HepG2 (cell line): ENCODE measurements at regions of chr6 and their contacts with region 1.

Region 1: GRCh38 chr6:167268683-167269280 is 22.3 kb upstream of the UNC93A start:
- DNase-seq: peak; percentile 93
- ATAC-seq: peak; percentile 95
- H3K4me3 ChIP-seq: peak overlapping the region; percentile 2 to 58 (median 5); a peak in 3 of 6 replicates
- H3K27ac ChIP-seq: peak overlapping the region; percentile 88
- H3K4me1 ChIP-seq: peaks cover 88% of the 10 kb centered on the region
- H3K27me3 ChIP-seq: no peaks in the 10 kb centered on the region
- CTCF ChIP-seq: peak; percentile 24; the same call in 1 of the 2 replicates
- EP300 ChIP-seq: peak; percentile 71 to 94; a peak in 3 of 4 replicates
- POLR2A ChIP-seq: peak; percentile 74 to 83
- RAD21 ChIP-seq: peak; percentile 74

Region 2: GRCh38 chr6:167093922-167094432 is 174.8 kb before region 1 on chr6:
- CTCF ChIA-PET with region 1: no interaction called
- POLR2A ChIA-PET with region 1: no interaction called
- in situ Hi-C with region 1: no loop called
- intact Hi-C with region 1: no loop called
- DNase-seq: no peak
- ATAC-seq: no peak
- H3K4me3 ChIP-seq: no peak overlapping the region
- H3K27ac ChIP-seq: no peak overlapping the region
- H3K4me1 ChIP-seq: peaks cover 11% of the 10 kb centered on the region
- H3K27me3 ChIP-seq: peaks cover 4 to 14% of the 10 kb centered on the region in 2 experiments; a peak in 4 of 5 replicates
- CTCF ChIP-seq: no peak
- EP300 ChIP-seq: no peak
- POLR2A ChIP-seq: no peak
- RAD21 ChIP-seq: no peak

Region 3: DNA sequence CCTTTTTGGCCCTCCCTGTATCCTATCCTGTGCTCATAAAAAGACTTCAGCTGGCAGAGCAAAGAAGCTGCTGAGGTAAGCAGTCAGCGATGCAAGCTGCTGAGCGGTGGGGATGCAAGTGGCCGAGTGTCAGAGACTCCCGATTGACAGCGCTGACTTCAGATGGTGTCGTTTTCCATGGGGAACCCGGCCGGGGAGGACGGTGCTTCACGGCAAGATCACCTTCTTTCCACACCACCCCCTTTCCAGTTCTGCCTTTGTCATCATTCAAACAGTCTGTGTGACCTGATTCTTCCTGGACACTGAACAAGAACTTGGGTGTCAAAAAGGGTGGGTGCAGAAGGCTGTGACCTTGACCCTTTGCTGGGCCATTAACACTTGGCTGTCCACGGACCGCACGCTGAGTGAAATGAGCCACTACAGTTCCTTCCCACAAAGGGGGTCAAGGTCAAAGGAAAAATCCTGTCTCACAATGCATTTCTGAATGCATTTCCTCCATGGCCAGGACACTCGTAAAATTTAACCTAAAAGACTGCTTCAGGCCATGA is 30.6 kb before region 1 on chr6:
- CTCF ChIA-PET with region 1: no interaction called
- POLR2A ChIA-PET with region 1: interaction called, 19 read pairs
- in situ Hi-C with region 1: loop called (anchors 5 kb)
- intact Hi-C with region 1: no loop called
- DNase-seq: peak; percentile 58
- ATAC-seq: peak; percentile 46
- H3K4me3 ChIP-seq: peak overlapping the region; percentile 16 to 53 (median 22); a peak in 5 of 6 replicates
- H3K27ac ChIP-seq: peak overlapping the region; percentile 67
- H3K4me1 ChIP-seq: peaks cover 78% of the 10 kb centered on the region
- H3K27me3 ChIP-seq: no peaks in the 10 kb centered on the region
- CTCF ChIP-seq: 0 out of 2 replicates have a peak, but pooled peaks have one; percentile 8
- EP300 ChIP-seq: no peak
- POLR2A ChIP-seq: peak; percentile 40 to 52; a peak in 2 of 4 replicates
- RAD21 ChIP-seq: no peak

Region 4: GRCh38 chr6:167279766-167280446 is 11.1 kb after region 1 on chr6:
- CTCF ChIA-PET with region 1: no interaction called
- POLR2A ChIA-PET with region 1: interaction called, 33 read pairs
- in situ Hi-C with region 1: no loop called
- intact Hi-C with region 1: no loop called
- DNase-seq: no peak
- ATAC-seq: no peak
- H3K4me3 ChIP-seq: no peak overlapping the region
- H3K27ac ChIP-seq: no peak overlapping the region
- H3K4me1 ChIP-seq: peaks cover 62% of the 10 kb centered on the region
- H3K27me3 ChIP-seq: no peaks in the 10 kb centered on the region
- CTCF ChIP-seq: no peak
- EP300 ChIP-seq: no peak
- POLR2A ChIP-seq: no peak
- RAD21 ChIP-seq: no peak

Region 5: DNA sequence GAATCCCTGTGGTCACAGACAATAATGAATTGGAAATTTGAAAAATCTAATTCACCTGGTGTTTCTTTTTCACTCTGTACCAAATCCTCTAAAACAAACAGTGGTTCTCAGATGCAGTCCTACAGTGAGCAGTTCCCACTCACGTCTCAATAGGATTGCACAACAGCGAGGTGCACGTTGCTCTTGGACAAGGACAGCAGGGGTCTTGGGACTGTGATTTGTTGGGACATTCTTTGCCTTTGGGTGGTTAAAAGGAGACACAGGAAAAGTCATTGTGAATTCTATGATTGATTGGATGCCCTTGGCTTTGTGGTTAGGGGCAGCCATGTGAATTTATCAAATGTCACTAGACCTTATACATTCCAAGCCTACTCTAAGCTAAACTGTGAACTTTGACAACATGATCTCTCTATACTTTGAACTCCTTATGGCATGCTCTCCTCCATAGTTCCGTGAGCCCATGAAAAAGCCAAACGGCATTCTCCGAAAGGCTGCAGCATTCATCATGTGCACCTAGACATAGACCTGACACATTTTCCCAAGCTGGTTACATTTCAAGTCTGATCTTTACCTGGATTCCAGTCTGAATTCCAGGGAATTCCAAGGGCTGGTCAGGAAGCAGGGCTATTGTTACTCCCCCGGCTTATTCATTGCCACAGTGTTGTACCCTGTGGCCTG is 23.0 kb after region 1 on chr6:
- CTCF ChIA-PET with region 1: no interaction called
- POLR2A ChIA-PET with region 1: interaction called, 34 read pairs
- in situ Hi-C with region 1: no loop called
- intact Hi-C with region 1: no loop called
- DNase-seq: peak; percentile 77
- ATAC-seq: peak; percentile 48
- H3K4me3 ChIP-seq: peak overlapping the region; percentile 38 to 53 (median 38); a peak in 4 of 6 replicates
- H3K27ac ChIP-seq: peak overlapping the region; percentile 77
- H3K4me1 ChIP-seq: peaks cover 75% of the 10 kb centered on the region
- H3K27me3 ChIP-seq: no peaks in the 10 kb centered on the region
- CTCF ChIP-seq: peak; percentile 34; the same call in 1 of the 2 replicates
- EP300 ChIP-seq: peak in 1 of 2 experiments; percentile 63; a peak in 1 of 4 replicates
- POLR2A ChIP-seq: no peak; a peak in 1 of 4 replicates
- RAD21 ChIP-seq: peak; percentile 15

Region 6: DNA sequence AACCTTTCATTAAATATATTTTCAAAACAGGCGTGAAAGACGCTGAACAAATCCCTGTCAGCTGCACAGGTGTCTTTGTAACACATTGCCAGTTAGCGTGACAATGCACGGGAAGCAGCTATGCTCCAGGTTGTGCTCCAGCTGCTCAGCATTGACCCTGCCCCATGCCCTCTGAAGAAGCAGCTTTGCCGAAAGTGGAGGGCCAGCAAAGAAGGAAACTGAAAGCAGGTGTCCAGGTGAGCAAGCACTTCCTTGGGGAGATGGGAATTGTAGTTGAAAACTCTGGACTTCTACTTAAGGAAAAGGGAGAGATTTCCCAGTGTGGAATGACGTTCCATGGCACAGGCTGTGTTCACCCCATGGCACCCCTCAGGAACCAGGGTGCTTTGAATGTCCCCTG is 181.8 kb after region 1 on chr6:
- CTCF ChIA-PET with region 1: no interaction called
- POLR2A ChIA-PET with region 1: no interaction called
- in situ Hi-C with region 1: no loop called
- intact Hi-C with region 1: no loop called
- DNase-seq: no peak
- ATAC-seq: no peak
- H3K4me3 ChIP-seq: no peak overlapping the region
- H3K27ac ChIP-seq: no peak overlapping the region
- H3K4me1 ChIP-seq: no peaks in the 10 kb centered on the region
- H3K27me3 ChIP-seq: peaks cover 0 to 34% of the 10 kb centered on the region in 2 experiments; a peak in 3 of 5 replicates
- CTCF ChIP-seq: no peak
- EP300 ChIP-seq: no peak
- POLR2A ChIP-seq: no peak
- RAD21 ChIP-seq: no peak

Region 7: DNA sequence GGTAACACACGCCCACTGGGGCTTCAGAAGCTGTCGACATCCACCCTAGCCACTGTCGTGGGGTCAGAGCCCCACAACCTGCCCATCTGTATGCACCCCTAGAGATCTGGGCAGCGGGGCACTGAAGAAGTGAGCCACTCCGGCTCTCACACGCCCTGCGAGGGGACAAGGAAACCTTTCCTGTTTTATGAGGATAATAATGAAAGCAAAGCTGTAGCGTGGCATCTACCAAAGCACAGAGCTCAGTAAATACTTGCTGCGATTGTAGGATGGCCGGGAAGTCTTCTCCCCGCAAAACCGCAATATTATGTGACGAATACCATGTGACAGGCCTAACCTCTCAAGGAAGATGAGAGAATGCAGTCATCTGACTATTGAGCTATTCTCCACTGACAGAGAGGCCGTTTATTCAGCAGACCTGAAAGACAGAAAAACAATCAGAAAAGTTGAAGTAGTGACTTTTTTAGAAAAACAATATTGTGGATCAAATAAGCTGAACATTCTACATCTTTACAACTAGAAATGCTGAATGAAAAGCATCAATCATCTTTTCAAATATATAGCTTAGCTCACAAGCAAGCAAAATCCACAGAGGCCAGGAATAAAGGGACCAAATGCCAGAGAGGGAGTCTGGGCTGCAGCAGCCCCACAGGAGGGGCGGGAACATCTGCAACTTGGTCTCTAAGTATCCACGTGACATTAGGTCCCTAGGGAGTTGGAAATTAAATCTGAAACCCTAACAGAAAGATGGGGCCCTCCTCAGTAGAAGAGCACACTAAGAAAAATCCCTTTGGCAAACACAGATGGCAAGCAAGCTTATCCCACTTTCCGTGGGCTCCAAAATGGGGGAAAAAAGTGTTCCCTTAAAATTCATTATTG is 263.9 kb after region 1 on chr6:
- CTCF ChIA-PET with region 1: no interaction called
- POLR2A ChIA-PET with region 1: no interaction called
- in situ Hi-C with region 1: no loop called
- intact Hi-C with region 1: no loop called
- DNase-seq: no peak
- ATAC-seq: no peak
- H3K4me3 ChIP-seq: peak overlapping the region in 1 of 3 experiments; percentile 11; a peak in 1 of 6 replicates
- H3K27ac ChIP-seq: no peak overlapping the region
- H3K4me1 ChIP-seq: peaks cover 40% of the 10 kb centered on the region
- H3K27me3 ChIP-seq: peaks cover 0 to 19% of the 10 kb centered on the region in 2 experiments; a peak in 4 of 5 replicates
- CTCF ChIP-seq: no peak
- EP300 ChIP-seq: no peak
- POLR2A ChIP-seq: no peak
- RAD21 ChIP-seq: no peak

Region 8: DNA sequence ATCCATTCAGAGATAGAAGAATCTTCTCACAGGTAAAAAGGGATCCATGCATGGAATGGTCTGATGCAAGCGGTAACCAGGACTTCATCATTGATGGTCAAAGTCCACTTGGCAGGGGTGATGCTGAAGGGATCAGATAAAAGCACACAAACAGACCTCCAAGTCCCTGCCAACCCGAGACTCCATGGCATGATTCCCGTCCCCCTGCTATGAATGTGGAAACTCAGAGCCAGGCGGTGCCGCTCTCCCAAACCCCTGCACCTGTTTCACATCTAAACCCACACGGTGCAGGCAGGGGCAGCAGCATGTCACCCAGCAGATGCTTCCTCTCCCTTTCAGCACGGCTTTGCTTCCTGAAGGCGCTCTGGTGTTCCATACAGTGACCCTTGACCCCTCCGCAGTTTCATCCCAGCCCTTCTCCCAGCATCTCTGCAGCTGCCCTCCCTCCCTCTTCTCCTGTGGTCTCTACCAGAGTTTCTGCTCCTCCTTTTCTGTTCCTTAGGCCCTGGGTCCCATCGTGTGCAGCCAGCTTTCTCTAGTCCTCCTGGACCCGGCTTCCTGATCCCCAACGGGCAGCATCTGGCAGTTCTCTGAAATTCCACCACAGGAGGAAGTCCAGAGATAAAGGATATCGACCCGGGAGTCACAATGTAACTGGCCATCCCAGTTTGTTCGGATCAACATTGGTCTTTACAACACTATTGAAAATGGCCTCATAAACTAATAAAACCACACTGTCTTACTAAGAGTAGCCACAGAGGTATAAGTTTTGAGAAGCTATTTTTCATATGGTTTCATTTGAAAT is 291.1 kb after region 1 on chr6:
- CTCF ChIA-PET with region 1: no interaction called
- POLR2A ChIA-PET with region 1: no interaction called
- in situ Hi-C with region 1: no loop called
- intact Hi-C with region 1: no loop called
- DNase-seq: peak; percentile 97
- ATAC-seq: peak; percentile 86
- H3K4me3 ChIP-seq: peak overlapping the region; percentile 35 to 67 (median 60); a peak in 5 of 6 replicates
- H3K27ac ChIP-seq: peak overlapping the region; percentile 81
- H3K4me1 ChIP-seq: peaks cover 47% of the 10 kb centered on the region
- H3K27me3 ChIP-seq: no peaks in the 10 kb centered on the region
- CTCF ChIP-seq: peak; percentile 23; the same call in 1 of the 2 replicates
- EP300 ChIP-seq: peak; percentile 62 to 85; a peak in 3 of 4 replicates
- POLR2A ChIP-seq: peak; percentile 63 to 72; a peak in 2 of 4 replicates
- RAD21 ChIP-seq: peak; percentile 56; the same call in 1 of the 2 replicates